ENCODE measurements at regions of chr12 and their contacts with region 1.

Region 1: DNA sequence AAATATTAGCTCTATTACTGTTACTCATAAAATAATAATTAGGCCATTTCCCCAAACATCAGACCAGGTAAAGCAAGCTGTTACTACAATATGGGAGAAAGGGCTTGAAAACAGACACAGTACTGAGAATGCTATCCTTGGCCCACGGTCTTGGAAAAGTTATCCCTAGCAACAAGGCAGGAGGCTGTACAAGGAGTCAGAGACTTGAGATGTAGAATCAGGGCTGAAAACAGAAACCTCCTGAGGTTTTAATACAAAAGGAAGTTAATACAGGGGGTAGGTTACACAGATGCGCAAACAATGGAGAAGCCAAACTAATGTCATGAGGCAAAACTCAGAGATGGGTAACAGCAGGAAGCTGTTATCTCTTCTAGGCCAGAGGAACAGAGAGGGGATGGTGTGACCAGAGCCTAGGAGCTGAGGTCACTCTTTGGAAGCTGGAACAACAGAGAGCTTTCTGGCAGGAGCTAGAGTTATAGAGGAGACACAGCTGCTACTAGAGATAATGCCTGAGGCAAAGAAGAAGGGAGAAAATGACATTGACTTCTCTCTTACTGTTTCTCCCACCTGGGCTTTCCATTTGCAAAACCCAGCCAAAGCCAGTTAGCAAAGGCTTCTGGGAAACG is 248.8 kb downstream of the SUDS3 start:
- DNase-seq: no peak
- ATAC-seq: no peak
- H3K4me3 ChIP-seq: no peak overlapping the region
- H3K27ac ChIP-seq: no peak overlapping the region
- H3K4me1 ChIP-seq: no peaks in the 10 kb centered on the region
- H3K27me3 ChIP-seq: peaks cover 22% of the 10 kb centered on the region
- CTCF ChIP-seq: no peak
- POLR2A ChIP-seq: no peak
- RAD21 ChIP-seq: no peak

Region 2: GRCh38 chr12:118164798-118165486 is 460.2 kb before region 1 on chr12:
- CTCF ChIA-PET with region 1: no interaction called
- POLR2A ChIA-PET with region 1: no interaction called
- RAD21 ChIA-PET with region 1: no interaction called
- intact Hi-C with region 1: loop called (anchors 5 kb)
- DNase-seq: peak; percentile 18
- ATAC-seq: peak; percentile 91
- H3K4me3 ChIP-seq: no peak overlapping the region
- H3K27ac ChIP-seq: no peak overlapping the region
- H3K4me1 ChIP-seq: no peaks in the 10 kb centered on the region
- H3K27me3 ChIP-seq: no peaks in the 10 kb centered on the region
- CTCF ChIP-seq: peak; percentile 68 to 80 (median 73)
- POLR2A ChIP-seq: no peak
- RAD21 ChIP-seq: peak; percentile 89

Region 3: DNA sequence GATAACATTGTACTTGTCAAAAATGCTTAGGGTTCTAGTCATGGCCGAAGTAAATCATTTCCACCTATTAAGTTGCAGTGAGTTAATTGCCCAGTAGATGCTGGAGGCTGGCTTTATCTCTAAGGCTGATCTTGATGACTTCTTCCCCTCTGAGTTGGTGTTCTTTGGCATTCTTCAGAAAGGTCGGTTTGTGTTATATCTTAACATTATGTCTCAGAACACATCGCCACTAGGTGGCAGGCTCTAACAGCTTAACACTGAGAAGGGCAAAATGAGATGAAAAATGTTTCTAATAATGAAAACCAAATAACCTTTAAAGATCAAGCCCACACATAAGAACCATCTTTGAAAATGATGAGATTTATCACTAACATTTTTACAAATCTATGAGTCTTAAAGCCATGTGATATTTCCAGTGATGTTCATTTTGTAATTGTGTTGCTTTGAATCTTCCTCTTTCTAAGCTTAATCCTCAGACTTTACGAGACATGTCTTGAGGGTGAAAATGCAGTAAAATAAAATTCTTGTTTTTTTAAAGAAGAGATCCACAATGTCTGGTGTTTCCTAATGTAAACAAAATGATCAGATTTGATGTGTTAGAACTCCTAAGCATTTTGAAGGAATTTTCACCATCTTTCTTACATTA is 220.2 kb before region 1 on chr12:
- CTCF ChIA-PET with region 1: interaction called, 14 read pairs
- POLR2A ChIA-PET with region 1: no interaction called
- RAD21 ChIA-PET with region 1: no interaction called
- intact Hi-C with region 1: loop called (anchors 1 kb)
- DNase-seq: peak; percentile 37
- ATAC-seq: peak; percentile 84
- H3K4me3 ChIP-seq: no peak overlapping the region
- H3K27ac ChIP-seq: no peak overlapping the region
- H3K4me1 ChIP-seq: no peaks in the 10 kb centered on the region
- H3K27me3 ChIP-seq: no peaks in the 10 kb centered on the region
- CTCF ChIP-seq: peak; percentile 57 to 90 (median 62)
- POLR2A ChIP-seq: no peak
- RAD21 ChIP-seq: peak; percentile 80

Region 4: GRCh38 chr12:118436002-118436730 is 189.0 kb before region 1 on chr12:
- CTCF ChIA-PET with region 1: no interaction called
- POLR2A ChIA-PET with region 1: no interaction called
- RAD21 ChIA-PET with region 1: no interaction called
- intact Hi-C with region 1: loop called (anchors 1 kb)
- DNase-seq: peak; percentile 12
- ATAC-seq: peak; percentile 86
- H3K4me3 ChIP-seq: no peak overlapping the region
- H3K27ac ChIP-seq: no peak overlapping the region
- H3K4me1 ChIP-seq: no peaks in the 10 kb centered on the region
- H3K27me3 ChIP-seq: peaks cover 50% of the 10 kb centered on the region
- CTCF ChIP-seq: peak; percentile 45 to 65 (median 65); a peak in 5 of 6 replicates
- POLR2A ChIP-seq: no peak
- RAD21 ChIP-seq: peak; percentile 74

Measured in HCT116 (cell line).